Heart right ventricle (tissue), 16 donors: ENCODE measurements at regions of chr3 and their contacts with region 1.

Region 1: GRCh38 chr3:3005146-3005744 is 104.9 kb downstream of the IL5RA start:
- DNase-seq: no peak
- ATAC-seq: no peak
- H3K4me3 ChIP-seq: no peak overlapping the region
- H3K27ac ChIP-seq: no peak overlapping the region
- H3K4me1 ChIP-seq: no peaks in the 10 kb centered on the region
- H3K27me3 ChIP-seq: peaks cover 0 to 8% (median 0%) of the 10 kb centered on the region in 7 donors
- CTCF ChIP-seq: no peak

Region 2: GRCh38 chr3:2984005-2984830 is 21.0 kb before region 1 on chr3:
- intact Hi-C with region 1: loop called in 1 of 10 experiments (anchors 1 kb)
- DNase-seq: no peak
- ATAC-seq: no peak
- H3K4me3 ChIP-seq: no peak overlapping the region
- H3K27ac ChIP-seq: no peak overlapping the region
- H3K4me1 ChIP-seq: no peaks in the 10 kb centered on the region
- H3K27me3 ChIP-seq: no peaks in the 10 kb centered on the region
- CTCF ChIP-seq: no peak

Region 3: GRCh38 chr3:3636810-3637422 is 631.7 kb after region 1 on chr3:
- intact Hi-C with region 1: no loop called
- DNase-seq: no peak
- ATAC-seq: no peak
- H3K4me3 ChIP-seq: no peak overlapping the region
- H3K27ac ChIP-seq: no peak overlapping the region
- H3K4me1 ChIP-seq: peaks cover 0 to 7% (median 0%) of the 10 kb centered on the region in 9 donors
- H3K27me3 ChIP-seq: no peaks in the 10 kb centered on the region
- CTCF ChIP-seq: no peak